Caco-2 (cell line): ENCODE measurements at regions of chr11 and their contacts with region 1.

Region 1: GRCh38 chr11:102614485-102614884 is 10.6 kb downstream of the MMP20 start:
- DNase-seq: peak in 1 of 2 experiments; percentile 30
- H3K4me3 ChIP-seq: no peak overlapping the region
- H3K4me3 Mint-ChIP-seq: no peak overlapping the region
- H3K27ac Mint-ChIP-seq: no peak overlapping the region
- H3K4me1 ChIP-seq: peaks cover 28% of the 10 kb centered on the region
- H3K4me1 Mint-ChIP-seq: peaks cover 35% of the 10 kb centered on the region
- H3K27me3 ChIP-seq: no peaks in the 10 kb centered on the region
- H3K27me3 Mint-ChIP-seq: no peaks in the 10 kb centered on the region
- CTCF ChIP-seq: peak in 1 of 2 experiments; percentile 46

Region 2: DNA sequence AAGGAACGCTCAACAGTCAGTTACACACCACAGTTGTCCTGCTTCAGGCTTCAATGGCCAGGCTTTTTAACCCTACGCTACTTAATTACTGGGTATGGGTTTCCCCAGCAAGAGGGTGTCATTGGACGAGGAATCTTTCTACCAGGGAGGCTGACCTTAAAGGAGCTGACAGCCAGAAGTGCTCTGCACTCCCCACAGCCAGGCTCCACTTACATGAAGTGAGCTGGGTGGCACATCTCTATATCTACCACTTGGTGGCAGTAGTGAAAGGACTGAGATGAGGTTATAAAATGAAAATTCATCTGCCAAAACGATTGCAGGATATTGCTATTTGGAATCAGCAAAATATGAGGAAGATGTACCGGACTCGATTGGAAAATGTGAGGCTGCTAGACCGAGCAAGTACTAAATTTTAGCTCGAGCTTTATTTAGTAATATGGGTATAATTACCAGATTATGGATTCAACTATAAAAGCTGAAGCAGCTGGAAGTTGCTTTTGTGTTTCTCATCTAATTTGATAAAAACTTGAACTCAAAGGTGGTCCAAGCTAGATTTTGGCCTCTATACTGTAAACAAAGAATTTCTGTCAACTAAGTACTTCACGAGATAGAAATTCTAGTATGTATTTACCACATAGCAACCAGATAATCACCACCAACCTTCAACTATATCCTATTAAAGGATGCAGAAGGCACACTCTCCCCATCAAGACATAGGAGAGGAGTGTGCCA is 753.6 kb before region 1 on chr11:
- CTCF ChIA-PET with region 1: interaction called, 4 read pairs
- POLR2A ChIA-PET with region 1: no interaction called
- intact Hi-C with region 1: loop called (anchors 5 kb)
- DNase-seq: peak; percentile 73 to 79
- H3K4me3 ChIP-seq: no peak overlapping the region
- H3K4me3 Mint-ChIP-seq: no peak overlapping the region
- H3K27ac Mint-ChIP-seq: peak overlapping the region; percentile 71
- H3K4me1 ChIP-seq: peaks cover 28% of the 10 kb centered on the region
- H3K4me1 Mint-ChIP-seq: peaks cover 25% of the 10 kb centered on the region
- H3K27me3 ChIP-seq: no peaks in the 10 kb centered on the region
- H3K27me3 Mint-ChIP-seq: no peaks in the 10 kb centered on the region
- CTCF ChIP-seq: peak; percentile 89 to 95

Region 3: DNA sequence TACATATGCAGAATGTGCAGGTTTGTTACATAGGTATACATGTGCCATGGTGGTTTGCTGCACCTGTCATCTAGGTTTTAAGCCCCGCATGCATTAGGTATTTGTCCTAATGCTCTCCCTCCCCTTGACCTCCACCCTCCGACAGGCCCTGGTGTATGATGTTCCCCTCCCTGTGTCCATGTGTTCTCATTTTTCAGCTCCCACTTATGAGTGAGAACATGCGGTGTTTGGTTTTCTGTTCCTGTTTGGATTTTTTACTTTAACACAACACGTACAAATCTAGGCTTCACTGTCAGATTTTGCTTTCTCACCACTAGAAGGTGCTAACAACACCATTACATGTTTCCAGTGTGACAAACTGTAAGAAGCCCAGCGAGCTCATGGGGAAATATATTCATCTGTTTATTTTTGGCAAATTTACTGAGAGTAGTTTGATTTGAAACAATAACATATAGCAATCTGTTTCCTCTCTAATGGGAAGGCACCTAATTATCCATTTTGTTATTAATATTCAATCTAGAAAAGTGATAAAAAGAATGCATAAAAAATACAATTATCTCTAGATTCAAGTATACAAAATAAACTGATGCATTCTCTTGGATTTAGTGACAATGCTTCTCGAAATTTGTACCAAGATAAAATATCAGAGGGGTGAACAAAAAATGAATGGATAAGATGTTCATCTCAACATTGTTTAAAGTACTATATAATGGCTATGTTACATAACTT is 320.4 kb before region 1 on chr11:
- CTCF ChIA-PET with region 1: interaction called, 13 read pairs
- POLR2A ChIA-PET with region 1: no interaction called
- intact Hi-C with region 1: no loop called
- DNase-seq: peak in 1 of 2 experiments; percentile 32
- H3K4me3 ChIP-seq: no peak overlapping the region
- H3K4me3 Mint-ChIP-seq: no peak overlapping the region
- H3K27ac Mint-ChIP-seq: no peak overlapping the region
- H3K4me1 ChIP-seq: no peaks in the 10 kb centered on the region
- H3K4me1 Mint-ChIP-seq: peaks cover 6% of the 10 kb centered on the region
- H3K27me3 ChIP-seq: no peaks in the 10 kb centered on the region
- H3K27me3 Mint-ChIP-seq: no peaks in the 10 kb centered on the region
- CTCF ChIP-seq: peak; percentile 72 to 89

Region 4: DNA sequence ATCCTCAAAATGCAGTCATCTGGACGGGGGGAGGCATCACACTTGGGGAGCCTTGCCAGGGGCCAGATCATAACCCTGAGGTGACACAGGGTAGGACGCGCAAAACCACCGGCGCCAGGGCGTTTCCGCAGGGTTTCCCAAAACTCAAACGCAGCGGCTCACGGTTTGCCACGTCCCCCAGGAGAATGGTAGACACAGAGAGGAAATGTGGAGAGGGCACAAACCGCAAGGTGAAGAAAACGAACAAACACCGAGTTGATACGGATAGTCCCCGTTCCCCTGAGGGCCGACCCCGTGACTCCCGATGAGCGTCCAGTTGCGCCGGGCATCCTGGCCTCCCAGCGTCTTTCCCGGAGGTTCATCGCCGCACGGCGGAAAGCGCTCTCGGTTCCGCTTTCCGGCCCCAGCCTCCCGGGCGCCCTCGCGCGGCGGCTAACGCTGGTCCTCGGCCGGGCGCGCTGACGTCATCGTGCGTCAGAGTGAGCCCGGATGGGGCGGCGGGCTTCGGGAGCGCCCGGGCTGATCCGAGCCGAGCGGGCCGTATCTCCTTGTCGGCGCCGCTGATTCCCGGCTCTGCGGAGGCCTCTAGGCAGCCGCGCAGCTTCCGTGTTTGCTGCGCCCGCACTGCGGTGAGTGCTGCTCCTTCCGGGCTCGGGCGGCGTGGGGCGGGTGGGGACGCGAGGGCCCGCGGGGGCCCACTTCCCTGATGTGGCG is 267.6 kb before region 1 on chr11 and contains the start of gene BIRC2:
- CTCF ChIA-PET with region 1: interaction called, 51 read pairs
- POLR2A ChIA-PET with region 1: interaction called, 3 read pairs
- intact Hi-C with region 1: loop called (anchors 1 kb)
- DNase-seq: peak; percentile 96 to 100
- H3K4me3 ChIP-seq: peak within 1 kb of the TSS; percentile 52
- H3K4me3 Mint-ChIP-seq: peak within 1 kb of the TSS; percentile 93
- H3K27ac Mint-ChIP-seq: peak within 1 kb of the TSS; percentile 68
- H3K4me1 ChIP-seq: peaks cover 17% of the 10 kb centered on the region
- H3K4me1 Mint-ChIP-seq: peaks cover 8% of the 10 kb centered on the region
- H3K27me3 ChIP-seq: no peaks in the 10 kb centered on the region
- H3K27me3 Mint-ChIP-seq: no peaks in the 10 kb centered on the region
- CTCF ChIP-seq: peak; percentile 71 to 97
- total RNA-seq, gene BIRC2: 52.7 and 53.5 TPM in 2 replicates

Region 5: DNA sequence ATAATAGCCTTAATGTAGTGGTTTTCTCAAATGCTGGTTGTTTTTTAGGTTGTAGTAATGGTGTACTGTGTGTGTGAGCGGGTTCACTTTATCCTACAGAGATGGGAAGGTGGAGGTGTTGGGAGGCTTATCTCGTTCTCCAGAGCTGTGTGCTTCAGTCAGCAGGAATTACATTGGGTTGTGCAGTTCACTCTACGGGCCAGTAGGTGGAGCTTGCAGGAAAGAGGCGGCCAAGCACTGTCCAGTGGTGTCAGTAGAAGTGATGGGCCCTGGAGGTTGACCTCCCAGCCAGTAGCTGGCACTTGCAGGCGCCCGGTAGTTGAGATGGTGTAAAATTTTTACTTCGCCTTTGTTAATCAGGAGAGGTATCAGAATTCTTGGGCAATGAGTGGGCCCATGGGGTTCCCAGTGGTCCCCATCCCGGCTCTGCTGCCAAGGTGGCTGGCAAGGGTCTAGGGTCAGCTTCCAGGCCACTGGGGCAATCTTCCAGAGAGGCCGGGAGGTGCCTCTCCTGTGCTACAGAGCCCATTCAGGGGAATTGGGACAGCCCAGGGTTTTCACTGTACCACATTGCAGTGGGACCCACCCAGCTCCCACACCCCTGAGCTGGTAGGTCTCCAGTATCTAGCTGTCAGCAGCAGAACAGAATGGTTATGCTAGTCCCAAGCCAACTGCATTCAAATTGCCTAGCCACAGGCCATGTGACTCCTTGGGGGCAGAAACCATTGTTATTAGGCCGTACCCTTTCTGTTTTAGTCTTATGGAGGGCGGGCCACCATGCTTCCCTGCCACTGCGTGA is 223.6 kb before region 1 on chr11:
- CTCF ChIA-PET with region 1: interaction called, 45 read pairs
- POLR2A ChIA-PET with region 1: no interaction called
- intact Hi-C with region 1: loop called (anchors 1 kb)
- DNase-seq: peak; percentile 89
- H3K4me3 ChIP-seq: no peak overlapping the region
- H3K4me3 Mint-ChIP-seq: no peak overlapping the region
- H3K27ac Mint-ChIP-seq: peak overlapping the region; percentile 3
- H3K4me1 ChIP-seq: peaks cover 16% of the 10 kb centered on the region
- H3K4me1 Mint-ChIP-seq: peaks cover 21% of the 10 kb centered on the region
- H3K27me3 ChIP-seq: no peaks in the 10 kb centered on the region
- H3K27me3 Mint-ChIP-seq: no peaks in the 10 kb centered on the region
- CTCF ChIP-seq: peak; percentile 97 to 98

Region 6: GRCh38 chr11:102495161-102496042 is 119.1 kb before region 1 on chr11:
- CTCF ChIA-PET with region 1: interaction called, 21 read pairs
- POLR2A ChIA-PET with region 1: no interaction called
- intact Hi-C with region 1: loop called (anchors 1 kb)
- DNase-seq: peak; percentile 57 to 81
- H3K4me3 ChIP-seq: no peak overlapping the region
- H3K4me3 Mint-ChIP-seq: peak overlapping the region; percentile 34
- H3K27ac Mint-ChIP-seq: peak overlapping the region; percentile 72
- H3K4me1 ChIP-seq: peaks cover 33% of the 10 kb centered on the region
- H3K4me1 Mint-ChIP-seq: peaks cover 25% of the 10 kb centered on the region
- H3K27me3 ChIP-seq: no peaks in the 10 kb centered on the region
- H3K27me3 Mint-ChIP-seq: no peaks in the 10 kb centered on the region
- CTCF ChIP-seq: peak; percentile 82 to 93

Region 7: GRCh38 chr11:102559839-102560238 is 54.6 kb before region 1 on chr11:
- CTCF ChIA-PET with region 1: no interaction called
- POLR2A ChIA-PET with region 1: no interaction called
- intact Hi-C with region 1: no loop called
- DNase-seq: no peak
- H3K4me3 ChIP-seq: no peak overlapping the region
- H3K4me3 Mint-ChIP-seq: no peak overlapping the region
- H3K27ac Mint-ChIP-seq: no peak overlapping the region
- H3K4me1 ChIP-seq: peaks cover 15% of the 10 kb centered on the region
- H3K4me1 Mint-ChIP-seq: no peaks in the 10 kb centered on the region
- H3K27me3 ChIP-seq: no peaks in the 10 kb centered on the region
- H3K27me3 Mint-ChIP-seq: no peaks in the 10 kb centered on the region
- CTCF ChIP-seq: no peak

Region 8: GRCh38 chr11:102592634-102593581 is 21.6 kb before region 1 on chr11:
- CTCF ChIA-PET with region 1: interaction called, 5 read pairs
- POLR2A ChIA-PET with region 1: no interaction called
- intact Hi-C with region 1: loop called (anchors 1 kb)
- DNase-seq: peak in 1 of 2 experiments; percentile 54
- H3K4me3 ChIP-seq: no peak overlapping the region
- H3K4me3 Mint-ChIP-seq: no peak overlapping the region
- H3K27ac Mint-ChIP-seq: no peak overlapping the region
- H3K4me1 ChIP-seq: peaks cover 25% of the 10 kb centered on the region
- H3K4me1 Mint-ChIP-seq: peaks cover 17% of the 10 kb centered on the region
- H3K27me3 ChIP-seq: no peaks in the 10 kb centered on the region
- H3K27me3 Mint-ChIP-seq: no peaks in the 10 kb centered on the region
- CTCF ChIP-seq: peak; percentile 84 to 88